Naive thymus-derived CD4-positive, alpha-beta T cell (primary cell): ENCODE measurements at regions of chr12 and their contacts with region 1.

Region 1: DNA sequence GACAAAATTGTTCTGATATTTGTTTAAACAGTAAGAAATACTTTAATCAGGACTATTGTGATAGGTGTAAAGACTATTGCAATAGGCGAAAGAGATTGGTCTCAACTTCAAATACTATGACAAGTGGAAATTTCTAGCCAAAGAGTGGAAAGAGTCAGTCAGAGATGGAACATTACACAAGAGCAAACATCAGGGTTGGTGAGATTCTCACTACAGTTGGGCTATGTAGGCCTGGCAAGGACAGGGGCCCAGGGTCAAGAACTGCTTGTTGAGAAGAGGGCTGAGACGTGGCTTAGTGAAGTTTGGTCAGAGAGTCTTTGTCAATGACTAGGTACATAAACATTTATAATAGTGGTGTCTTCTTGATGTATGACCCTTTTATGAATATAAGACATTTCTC is 19.4 kb downstream of the CAND1 start:
- DNase-seq: no peak
- ATAC-seq: no peak
- H3K4me3 ChIP-seq: no peak overlapping the region
- H3K4me3 Mint-ChIP-seq: peak overlapping the region in 1 of 10 donors; percentile 54
- H3K27ac ChIP-seq: no peak overlapping the region
- H3K27ac Mint-ChIP-seq: peak overlapping the region in 4 of 9 donors; percentile 14 to 67 (median 44)
- H3K4me1 ChIP-seq: peaks cover 0 to 10% of the 10 kb centered on the region in 2 donors
- H3K4me1 Mint-ChIP-seq: peaks cover 29 to 82% (median 71%) of the 10 kb centered on the region in 7 donors
- H3K27me3 ChIP-seq: no peaks in the 10 kb centered on the region
- H3K27me3 Mint-ChIP-seq: no peaks in the 10 kb centered on the region

Region 2: GRCh38 chr12:66555113-66555746 is 733.3 kb before region 1 on chr12:
- CTCF ChIA-PET with region 1: no interaction called
- POLR2A ChIA-PET with region 1: no interaction called
- intact Hi-C with region 1: no loop called
- DNase-seq: no peak
- ATAC-seq: no peak
- H3K4me3 ChIP-seq: no peak overlapping the region
- H3K4me3 Mint-ChIP-seq: no peak overlapping the region
- H3K27ac ChIP-seq: no peak overlapping the region
- H3K27ac Mint-ChIP-seq: no peak overlapping the region
- H3K4me1 ChIP-seq: no peaks in the 10 kb centered on the region
- H3K4me1 Mint-ChIP-seq: no peaks in the 10 kb centered on the region
- H3K27me3 ChIP-seq: no peaks in the 10 kb centered on the region
- H3K27me3 Mint-ChIP-seq: peaks cover 0 to 8% (median 3%) of the 10 kb centered on the region in 5 donors

Region 3: DNA sequence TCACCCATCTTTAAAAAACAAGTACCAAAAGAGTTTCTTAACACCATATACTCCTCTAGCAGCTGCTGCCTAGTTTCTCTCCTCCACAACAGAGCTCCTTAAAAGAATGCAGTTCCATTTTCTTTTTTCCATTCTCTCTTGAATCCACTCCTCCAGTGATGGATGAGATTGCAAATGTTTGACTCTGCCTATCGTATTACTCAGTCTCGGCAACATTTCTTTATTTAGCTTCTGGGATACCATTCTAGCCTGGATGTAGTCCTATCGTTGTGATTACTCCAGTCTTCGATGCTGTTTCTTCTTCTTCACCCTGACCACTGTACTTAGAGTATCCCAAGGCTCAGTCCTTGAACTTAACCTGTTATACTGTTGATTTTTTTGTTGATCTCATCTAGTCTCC is 11.4 kb after region 1 on chr12:
- CTCF ChIA-PET with region 1: no interaction called
- POLR2A ChIA-PET with region 1: no interaction called
- intact Hi-C with region 1: loop called in 1 of 2 experiments (anchors 2 kb)
- DNase-seq: no peak
- ATAC-seq: no peak
- H3K4me3 ChIP-seq: no peak overlapping the region
- H3K4me3 Mint-ChIP-seq: no peak overlapping the region
- H3K27ac ChIP-seq: no peak overlapping the region
- H3K27ac Mint-ChIP-seq: peak overlapping the region in 3 of 9 donors; percentile 3 to 14 (median 6)
- H3K4me1 ChIP-seq: no peaks in the 10 kb centered on the region
- H3K4me1 Mint-ChIP-seq: peaks cover 3 to 30% (median 17%) of the 10 kb centered on the region in 7 donors
- H3K27me3 ChIP-seq: no peaks in the 10 kb centered on the region
- H3K27me3 Mint-ChIP-seq: no peaks in the 10 kb centered on the region